ENCODE measurements at regions of chr5 and their contacts with region 1.

Region 1: GRCh38 chr5:41809128-41809527 is 61.1 kb downstream of the OXCT1 start:
- DNase-seq: no peak
- H3K4me3 ChIP-seq: no peak overlapping the region
- CTCF ChIP-seq: no peak

Region 2: DNA sequence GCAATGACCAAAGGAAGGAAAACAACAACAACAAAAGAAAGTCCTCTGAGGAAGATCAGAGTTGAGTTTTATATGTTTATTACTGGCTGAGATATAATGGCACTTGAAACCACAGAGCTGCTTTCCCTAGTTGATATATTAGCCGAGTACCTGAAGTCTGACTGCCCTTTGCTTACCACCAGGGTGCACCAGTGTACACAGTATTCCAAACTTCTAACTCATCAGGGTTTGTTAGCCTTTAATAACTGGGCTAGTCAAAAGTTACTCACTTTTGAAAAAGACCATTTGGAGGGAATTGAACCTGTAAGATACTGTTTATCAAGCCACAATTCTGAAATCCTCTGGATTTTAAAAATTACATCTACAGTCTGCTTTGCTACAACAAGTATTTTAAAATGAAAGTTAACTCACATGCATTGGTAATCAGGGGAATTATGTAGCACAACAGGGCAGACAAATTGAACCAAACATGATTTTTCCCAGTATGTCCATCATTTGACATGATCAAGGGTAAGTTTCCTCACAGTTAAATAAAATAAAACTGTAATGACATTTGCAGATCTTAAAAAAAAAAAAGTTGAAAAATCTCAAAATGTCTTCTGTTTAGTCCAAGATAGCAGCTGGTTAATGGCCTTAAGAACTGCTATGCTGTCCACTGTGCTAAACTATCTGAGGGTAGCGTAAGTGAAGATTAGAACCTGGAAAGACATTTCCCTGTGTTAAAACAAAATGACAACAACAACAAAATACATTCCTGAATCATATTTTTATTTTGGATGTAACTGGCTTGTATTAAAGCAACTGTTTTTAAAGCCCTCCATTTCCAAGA is 538.5 kb before region 1 on chr5:
- in situ Hi-C with region 1: loop called (anchors 25 kb)
- DNase-seq: peak; percentile 70
- H3K4me3 ChIP-seq: no peak overlapping the region
- CTCF ChIP-seq: peak; percentile 82

Measured in astrocyte of the spinal cord (primary cell).